Activated CD8-positive, alpha-beta T cell treated with anti-CD3 and anti-CD28 coated beads for 36 hours (primary cell): ENCODE measurements at regions of chr5 and their contacts with region 1.

Region 1: DNA sequence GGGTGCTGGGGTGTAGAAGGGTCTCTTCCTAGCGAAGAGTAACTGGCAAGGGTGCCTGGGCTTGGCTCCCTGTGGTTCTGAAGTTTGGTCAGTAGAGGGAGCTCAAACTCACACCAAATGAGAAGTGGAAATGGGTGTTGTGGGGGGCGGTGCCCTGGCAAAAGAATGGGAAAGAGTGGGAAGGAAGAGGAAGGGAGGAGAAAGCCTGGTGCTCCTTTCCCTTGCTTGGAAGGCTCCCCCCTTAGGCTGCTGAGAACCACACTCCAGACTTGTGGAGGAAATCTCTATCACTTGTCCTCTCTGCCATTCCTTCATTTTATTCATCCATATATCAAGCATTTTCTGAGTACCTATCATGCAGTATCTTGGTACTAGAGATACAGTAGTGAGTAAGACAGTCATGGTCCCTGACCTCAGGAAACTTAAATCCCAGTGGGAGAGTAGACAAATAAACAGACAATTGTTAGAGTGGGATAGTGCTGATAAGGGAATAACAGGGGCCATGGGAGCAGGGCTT is 13.0 kb downstream of the SLC4A9 start:
- DNase-seq: peak; percentile 57
- ATAC-seq: peak; percentile 86
- H3K4me3 Mint-ChIP-seq: no peak overlapping the region
- H3K27ac Mint-ChIP-seq: no peak overlapping the region
- H3K4me1 Mint-ChIP-seq: no peaks in the 10 kb centered on the region
- H3K27me3 Mint-ChIP-seq: no peaks in the 10 kb centered on the region
- CTCF ChIP-seq: peak; percentile 87

Region 2: GRCh38 chr5:139747583-139748504 is 625.2 kb before region 1 on chr5:
- CTCF ChIA-PET with region 1: no interaction called
- POLR2A ChIA-PET with region 1: no interaction called
- intact Hi-C with region 1: no loop called
- DNase-seq: peak; percentile 86
- ATAC-seq: peak; percentile 14
- H3K4me3 Mint-ChIP-seq: peak overlapping the region; percentile 68
- H3K27ac Mint-ChIP-seq: peak overlapping the region; percentile 92
- H3K4me1 Mint-ChIP-seq: peaks cover 46% of the 10 kb centered on the region
- H3K27me3 Mint-ChIP-seq: peaks cover 13% of the 10 kb centered on the region
- CTCF ChIP-seq: no peak

Region 3: DNA sequence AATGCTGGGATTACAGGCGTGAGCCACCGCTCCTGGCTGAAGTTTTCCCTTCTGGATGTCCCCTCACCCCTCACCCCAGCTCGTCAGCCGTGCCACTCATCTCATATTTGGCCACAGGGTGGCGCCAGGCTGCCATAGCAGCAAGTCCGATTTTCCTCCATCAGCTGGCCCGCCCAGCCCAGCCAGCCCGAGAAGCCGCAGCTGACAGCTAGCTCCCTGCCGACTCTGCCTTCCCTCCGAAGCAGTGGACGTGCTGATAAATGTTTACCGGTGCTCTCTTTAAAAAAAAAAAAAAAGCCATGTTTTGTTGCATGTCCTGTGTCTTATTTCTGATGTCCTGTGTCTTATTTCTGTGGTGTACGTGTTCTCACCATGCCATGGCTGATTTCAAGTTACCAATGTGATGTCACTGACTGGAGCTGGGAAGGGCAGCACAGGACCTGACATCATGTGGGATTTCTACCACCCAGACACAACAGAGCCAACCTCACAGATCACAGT is 128.5 kb before region 1 on chr5:
- CTCF ChIA-PET with region 1: interaction called, 160 read pairs
- POLR2A ChIA-PET with region 1: no interaction called
- intact Hi-C with region 1: no loop called
- DNase-seq: peak; percentile 91
- ATAC-seq: peak; percentile 77
- H3K4me3 Mint-ChIP-seq: no peak overlapping the region
- H3K27ac Mint-ChIP-seq: no peak overlapping the region
- H3K4me1 Mint-ChIP-seq: peaks cover 10% of the 10 kb centered on the region
- H3K27me3 Mint-ChIP-seq: no peaks in the 10 kb centered on the region
- CTCF ChIP-seq: peak; percentile 91

Region 4: DNA sequence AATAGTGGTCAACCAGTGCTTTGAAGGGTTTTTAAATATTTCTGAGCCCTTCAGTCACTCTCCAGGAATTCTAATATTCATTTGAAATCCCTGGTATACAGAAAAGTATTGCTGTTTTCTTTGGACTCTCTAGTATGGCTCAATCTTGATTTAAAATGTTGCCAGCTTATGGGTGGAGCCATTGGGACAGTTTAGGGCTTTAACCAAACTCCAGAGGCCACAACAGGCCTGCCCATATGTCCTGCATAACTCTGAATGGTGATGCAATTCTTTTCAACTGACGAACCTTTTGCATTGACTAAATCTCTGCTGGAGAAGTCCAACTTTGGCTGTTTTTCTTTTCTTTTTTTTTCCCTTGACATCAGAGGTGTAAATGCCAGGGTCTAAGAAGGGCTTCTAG is 18.3 kb after region 1 on chr5:
- CTCF ChIA-PET with region 1: interaction called, 25 read pairs
- POLR2A ChIA-PET with region 1: no interaction called
- intact Hi-C with region 1: no loop called
- DNase-seq: no peak
- ATAC-seq: no peak
- H3K4me3 Mint-ChIP-seq: no peak overlapping the region
- H3K27ac Mint-ChIP-seq: no peak overlapping the region
- H3K4me1 Mint-ChIP-seq: no peaks in the 10 kb centered on the region
- H3K27me3 Mint-ChIP-seq: no peaks in the 10 kb centered on the region
- CTCF ChIP-seq: no peak

Region 5: DNA sequence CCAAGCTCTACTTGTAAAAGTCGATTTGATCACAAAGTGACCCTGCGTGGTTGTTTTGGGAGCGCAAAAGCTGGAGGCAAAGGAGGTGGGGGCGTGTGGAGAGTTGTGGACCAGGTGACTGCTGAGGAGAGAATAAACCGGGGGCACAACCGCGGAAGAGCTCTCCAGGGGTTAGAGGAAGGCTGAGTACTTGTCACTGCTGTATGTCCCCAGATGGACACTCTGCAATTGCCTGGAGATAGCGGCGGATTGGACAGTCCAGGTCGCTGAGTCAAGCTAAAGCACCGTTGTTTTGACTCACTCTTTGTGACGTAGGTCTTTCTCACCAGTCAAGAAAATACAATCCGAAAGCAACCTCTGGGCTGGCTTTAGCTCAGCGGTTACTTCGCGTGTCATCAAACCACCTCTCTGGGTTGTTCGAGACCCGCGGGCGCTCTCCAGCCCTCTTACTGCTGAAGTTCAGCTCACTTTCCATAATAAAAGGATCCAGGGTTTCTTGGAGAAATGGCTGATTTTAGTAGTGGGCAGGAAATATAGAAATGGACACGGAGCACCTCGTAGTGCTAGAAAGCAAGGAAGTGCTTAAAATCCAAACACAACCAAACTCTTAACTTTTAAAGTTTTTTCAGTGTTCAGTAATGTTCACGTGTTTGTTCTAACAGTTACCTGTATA is 352.9 kb after region 1 on chr5:
- CTCF ChIA-PET with region 1: interaction called, 14 read pairs
- POLR2A ChIA-PET with region 1: no interaction called
- intact Hi-C with region 1: no loop called
- DNase-seq: peak; percentile 90
- ATAC-seq: peak; percentile 97
- H3K4me3 Mint-ChIP-seq: peak overlapping the region; percentile 83
- H3K27ac Mint-ChIP-seq: peak overlapping the region; percentile 82
- H3K4me1 Mint-ChIP-seq: peaks cover 10% of the 10 kb centered on the region
- H3K27me3 Mint-ChIP-seq: peaks cover 14% of the 10 kb centered on the region
- CTCF ChIP-seq: no peak